Posterior cingulate gyrus (tissue), 11 donors: ENCODE measurements at regions of chr3 and their contacts with region 1.

Region 1: DNA sequence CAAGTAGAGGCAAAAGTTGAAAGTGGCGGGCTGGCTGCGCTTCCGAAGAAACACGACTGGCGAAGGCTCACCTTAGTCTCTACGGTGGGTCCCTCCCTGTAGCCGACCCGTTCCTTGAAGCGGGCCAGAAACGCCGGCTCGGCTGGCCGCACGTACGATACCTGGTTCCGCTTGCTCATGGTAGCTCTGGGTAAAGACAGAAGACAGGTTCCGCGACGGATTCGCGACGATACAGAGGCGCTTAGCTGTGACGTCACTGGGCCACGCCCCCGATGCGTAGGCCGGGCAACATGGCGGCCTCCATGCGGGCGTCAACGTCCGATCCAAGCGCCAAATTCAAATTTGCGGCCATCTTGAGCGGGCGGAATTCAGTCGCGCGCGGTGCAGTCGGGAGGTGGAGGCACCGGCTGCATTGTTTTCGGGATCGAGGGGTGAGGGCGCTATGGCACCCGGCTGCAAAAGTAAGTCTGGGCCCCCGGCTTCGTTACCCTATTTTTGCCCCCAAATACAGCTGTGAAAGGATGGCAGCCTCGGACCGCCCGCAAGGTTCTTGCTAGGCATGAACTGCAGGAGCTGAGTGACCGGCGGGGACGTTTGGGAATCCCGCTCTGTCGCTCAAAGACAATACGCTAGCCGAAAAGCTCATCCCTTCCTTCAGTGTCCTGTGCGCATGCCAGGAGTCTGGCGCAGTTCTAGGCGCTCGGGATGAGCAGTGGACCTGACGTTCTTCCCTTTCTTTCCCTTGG is at the starts of genes KIAA1143 and KIF15:
- DNase-seq: peak; percentile 93 to 99 (median 96)

Region 2: GRCh38 chr3:44323341-44323955 is 438.1 kb before region 1 on chr3:
- intact Hi-C with region 1: loop called (anchors 10 kb)
- DNase-seq: peak in 6 of 10 donors; percentile 53 to 88 (median 66)

Region 3: GRCh38 chr3:44411031-44411645 is 350.5 kb before region 1 on chr3:
- intact Hi-C with region 1: no loop called
- DNase-seq: peak in 1 of 10 donors; percentile 53

Region 4: GRCh38 chr3:44612678-44613077 is 148.9 kb before region 1 on chr3:
- intact Hi-C with region 1: no loop called
- DNase-seq: no peak

Region 5: DNA sequence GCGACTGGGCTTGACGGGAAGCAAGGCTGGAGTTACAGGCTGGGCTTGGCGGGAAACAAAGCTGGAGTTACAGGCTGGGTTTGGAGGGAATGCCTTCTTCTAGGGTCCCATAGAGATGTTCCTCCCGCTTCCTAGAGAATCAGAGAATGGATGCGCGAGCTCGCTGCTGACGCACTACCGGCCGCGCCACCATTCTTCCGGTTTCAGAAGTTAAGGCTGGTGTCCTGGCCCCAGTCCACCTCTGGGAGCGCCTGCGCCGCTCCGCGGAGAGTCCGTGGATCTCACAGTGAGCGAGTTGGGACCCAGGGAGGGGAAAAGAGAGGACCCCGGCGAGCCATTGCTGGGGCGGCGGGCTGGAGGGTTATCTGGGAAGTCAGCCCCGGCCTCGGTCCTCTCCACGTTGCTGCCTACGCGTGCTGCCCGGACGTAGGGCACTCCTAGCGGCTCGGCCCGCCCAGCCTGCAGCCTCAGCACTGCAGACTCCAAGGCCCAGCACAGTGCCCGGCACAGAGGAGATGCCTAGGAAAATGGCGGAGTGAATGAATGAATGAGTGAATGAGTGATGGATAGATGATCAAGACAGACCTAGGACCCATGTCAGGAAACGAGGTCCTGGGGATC is 49.0 kb before region 1 on chr3 and contains the start of gene ZNF502:
- intact Hi-C with region 1: loop called (anchors 1 kb)
- DNase-seq: peak; percentile 81 to 98 (median 92)

Region 6: DNA sequence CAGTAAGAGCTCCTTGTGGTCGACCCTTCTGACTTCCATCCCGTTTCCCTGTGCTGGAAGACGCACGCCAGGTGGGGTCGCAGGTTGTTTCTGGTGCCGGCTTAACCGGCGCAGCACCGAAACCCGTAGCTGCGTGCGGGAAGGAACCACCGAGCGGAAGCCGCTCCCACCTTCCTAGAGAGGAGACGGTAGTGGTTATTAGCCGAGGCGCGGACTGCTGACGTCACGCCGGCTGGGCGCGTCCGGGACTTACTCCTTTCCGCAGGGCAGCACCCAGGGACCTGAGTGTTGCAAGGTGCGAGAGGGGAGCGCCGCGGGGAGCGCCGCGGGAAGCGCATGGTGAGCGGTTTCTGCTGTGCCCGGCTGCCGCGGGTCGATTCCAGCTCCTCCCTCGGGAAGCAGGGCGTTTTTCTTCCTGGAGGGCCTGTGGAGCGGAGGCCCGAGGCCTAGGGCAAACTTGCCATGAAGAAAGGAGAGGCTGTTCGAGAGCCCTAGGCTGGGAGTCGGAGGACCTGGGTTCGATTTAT is 32.1 kb before region 1 on chr3 and contains the start of gene ZNF501:
- intact Hi-C with region 1: loop called (anchors 1 kb)
- DNase-seq: peak; percentile 76 to 98 (median 92)

Region 7: DNA sequence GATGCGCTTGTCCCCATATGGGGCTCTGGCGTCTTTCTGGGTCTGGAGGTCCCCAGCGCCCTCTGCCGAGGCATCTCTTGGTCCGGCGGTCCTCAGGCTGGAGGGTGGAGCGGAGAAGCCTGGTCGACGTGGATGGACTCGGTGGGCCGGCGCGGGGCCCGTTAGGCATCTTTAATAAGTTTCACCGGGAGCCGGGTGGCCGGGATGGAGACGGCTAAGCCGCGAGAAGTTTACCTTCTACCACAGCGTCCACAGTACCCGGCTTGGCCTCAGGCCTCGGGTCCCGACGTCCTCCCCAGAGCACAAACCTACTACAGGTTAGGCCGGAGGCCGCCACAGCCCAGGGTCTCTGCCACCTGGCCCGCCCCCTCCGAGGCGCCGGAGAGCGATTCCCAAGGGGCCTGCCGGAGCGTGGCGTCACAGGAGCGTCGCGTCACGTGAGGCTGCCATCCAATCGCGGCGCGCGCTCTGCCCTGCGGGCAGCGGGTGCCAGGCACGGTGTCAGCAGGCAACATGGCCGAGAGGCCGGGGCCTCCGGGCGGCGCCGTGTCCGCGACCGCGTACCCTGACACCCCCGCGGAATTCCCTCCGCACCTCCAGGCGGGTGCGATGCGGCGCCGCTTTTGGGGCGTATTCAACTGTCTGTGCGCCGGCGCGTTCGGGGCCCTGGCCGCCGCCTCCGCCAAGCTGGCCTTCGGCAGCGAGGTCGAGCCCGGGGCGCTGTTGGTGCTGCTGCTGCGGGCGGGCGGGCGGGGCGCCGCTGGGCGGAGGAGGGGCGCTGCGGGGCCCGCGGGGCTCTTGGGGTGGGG is 100.0 kb after region 1 on chr3 and contains the start of gene TMEM42:
- intact Hi-C with region 1: loop called (anchors 5 kb)
- DNase-seq: peak; percentile 84 to 99 (median 93)

Region 8: GRCh38 chr3:44976002-44976815 is 214.6 kb after region 1 on chr3 and contains the starts of genes EXOSC7 and ZDHHC3:
- intact Hi-C with region 1: loop called (anchors 2 kb)
- DNase-seq: peak; percentile 80 to 97 (median 84)